CD8-positive, alpha-beta T cell (primary cell): ENCODE measurements at regions of chr5 and their contacts with region 1.

Region 1: GRCh38 chr5:131263648-131264450 is at the start of gene CDC42SE2:
- DNase-seq: peak; percentile 77 to 96 (median 86)
- ATAC-seq: peak; percentile 83
- H3K4me3 ChIP-seq: peak within 1 kb of the TSS; percentile 93 to 98
- H3K4me3 Mint-ChIP-seq: peak within 1 kb of the TSS; percentile 87
- H3K27ac ChIP-seq: peak within 1 kb of the TSS; percentile 90 to 93
- H3K27ac Mint-ChIP-seq: peak within 1 kb of the TSS; percentile 95
- H3K4me1 ChIP-seq: peaks cover 42% of the 10 kb centered on the region
- H3K4me1 Mint-ChIP-seq: peaks cover 56% of the 10 kb centered on the region
- H3K27me3 ChIP-seq: no peaks in the 10 kb centered on the region
- H3K27me3 Mint-ChIP-seq: no peaks in the 10 kb centered on the region
- CTCF ChIP-seq: no peak
- total RNA-seq, gene CDC42SE2: 340 to 348 TPM

Region 2: DNA sequence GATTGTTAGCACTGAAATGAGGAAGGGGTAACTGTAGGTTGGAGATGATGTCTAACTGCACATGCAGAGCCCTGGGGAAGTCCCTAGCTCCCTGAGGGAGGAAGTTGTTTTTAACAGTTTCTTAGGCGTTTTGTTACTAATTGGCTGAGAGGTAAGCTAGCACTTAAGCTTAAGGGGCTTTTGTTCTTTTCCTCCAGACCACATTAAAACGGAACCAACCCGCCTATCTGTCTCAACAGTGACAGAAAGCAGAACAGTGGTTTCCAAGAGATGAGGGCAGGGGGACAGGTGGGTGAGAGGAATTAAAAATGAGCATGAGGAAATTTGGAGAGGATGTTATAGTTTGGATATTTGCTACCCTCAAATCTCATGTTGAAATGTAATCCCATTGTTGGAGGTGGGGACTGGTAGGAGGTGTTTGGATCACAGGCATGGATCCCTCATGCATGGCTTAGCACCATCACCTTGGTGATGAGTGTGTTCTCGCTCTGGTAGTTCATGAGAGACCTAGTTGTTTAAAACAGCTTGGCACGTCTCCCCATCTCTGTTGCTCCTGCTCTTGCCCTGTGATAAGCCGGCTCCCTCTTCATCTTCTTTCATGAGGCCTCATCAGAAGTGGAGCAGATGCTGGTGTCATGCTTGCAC is 54.2 kb before region 1 on chr5:
- CTCF ChIA-PET with region 1: no interaction called
- POLR2A ChIA-PET with region 1: interaction called, 17 read pairs
- intact Hi-C with region 1: loop called in 1 of 2 experiments (anchors 2 kb)
- DNase-seq: peak; percentile 14 to 93 (median 55)
- ATAC-seq: peak; percentile 94
- H3K4me3 ChIP-seq: peak overlapping the region; percentile 2 to 13
- H3K4me3 Mint-ChIP-seq: peak overlapping the region; percentile 72
- H3K27ac ChIP-seq: peak overlapping the region; percentile 51 to 83
- H3K27ac Mint-ChIP-seq: peak overlapping the region; percentile 97
- H3K4me1 ChIP-seq: peaks cover 61% of the 10 kb centered on the region
- H3K4me1 Mint-ChIP-seq: peaks cover 60% of the 10 kb centered on the region
- H3K27me3 ChIP-seq: no peaks in the 10 kb centered on the region
- H3K27me3 Mint-ChIP-seq: no peaks in the 10 kb centered on the region
- CTCF ChIP-seq: no peak

Region 3: GRCh38 chr5:131281133-131281867 is 17.5 kb after region 1 on chr5:
- CTCF ChIA-PET with region 1: interaction called, 12 read pairs
- POLR2A ChIA-PET with region 1: interaction called, 239 read pairs
- intact Hi-C with region 1: loop called (anchors 1 to 2 kb)
- DNase-seq: peak in 2 of 9 experiments; percentile 83 to 91
- ATAC-seq: peak; percentile 81
- H3K4me3 ChIP-seq: peak overlapping the region; percentile 32 to 47
- H3K4me3 Mint-ChIP-seq: peak overlapping the region; percentile 81
- H3K27ac ChIP-seq: peak overlapping the region; percentile 75 to 86
- H3K27ac Mint-ChIP-seq: peak overlapping the region; percentile 94
- H3K4me1 ChIP-seq: peaks cover 87% of the 10 kb centered on the region
- H3K4me1 Mint-ChIP-seq: peaks cover 78% of the 10 kb centered on the region
- H3K27me3 ChIP-seq: no peaks in the 10 kb centered on the region
- H3K27me3 Mint-ChIP-seq: no peaks in the 10 kb centered on the region
- CTCF ChIP-seq: no peak

Region 4: DNA sequence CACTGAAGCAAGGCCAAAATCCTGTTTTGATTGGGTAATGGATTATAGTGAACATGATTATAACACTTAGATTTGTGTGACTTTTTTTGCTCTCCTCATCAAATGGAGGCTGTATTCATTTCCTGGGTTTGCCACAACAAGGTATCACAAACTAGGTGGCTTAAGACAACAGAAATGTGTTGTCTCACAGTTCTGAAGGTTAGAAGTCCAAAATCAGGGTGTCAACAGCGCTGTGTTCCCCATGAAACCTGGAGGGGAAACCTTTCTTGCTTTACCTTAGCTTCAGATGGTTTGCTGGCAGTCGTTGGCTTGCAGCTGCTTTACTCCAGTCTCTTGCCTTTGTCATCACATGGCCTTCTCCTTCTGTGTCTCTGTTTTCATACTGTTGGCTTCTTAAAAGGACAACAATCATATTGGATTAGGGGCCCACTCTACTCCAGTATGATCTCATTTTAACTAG is 32.4 kb after region 1 on chr5:
- CTCF ChIA-PET with region 1: interaction called, 4 read pairs
- POLR2A ChIA-PET with region 1: interaction called, 5 read pairs
- intact Hi-C with region 1: loop called in 1 of 2 experiments (anchors 5 kb)
- DNase-seq: peak in 4 of 9 experiments; percentile 29 to 74 (median 48)
- ATAC-seq: peak; percentile 60
- H3K4me3 ChIP-seq: no peak overlapping the region
- H3K4me3 Mint-ChIP-seq: peak overlapping the region; percentile 64
- H3K27ac ChIP-seq: peak overlapping the region in 1 of 2 experiments; percentile 55
- H3K27ac Mint-ChIP-seq: peak overlapping the region; percentile 84
- H3K4me1 ChIP-seq: peaks cover 81% of the 10 kb centered on the region
- H3K4me1 Mint-ChIP-seq: peaks cover 76% of the 10 kb centered on the region
- H3K27me3 ChIP-seq: no peaks in the 10 kb centered on the region
- H3K27me3 Mint-ChIP-seq: no peaks in the 10 kb centered on the region
- CTCF ChIP-seq: no peak

Region 5: GRCh38 chr5:131417240-131417869 is 153.5 kb after region 1 on chr5:
- CTCF ChIA-PET with region 1: interaction called, 17 read pairs
- POLR2A ChIA-PET with region 1: interaction called, 4 read pairs
- intact Hi-C with region 1: no loop called
- DNase-seq: peak; percentile 66 to 91 (median 85)
- ATAC-seq: peak; percentile 74
- H3K4me3 ChIP-seq: no peak overlapping the region
- H3K4me3 Mint-ChIP-seq: peak overlapping the region; percentile 64
- H3K27ac ChIP-seq: peak overlapping the region in 1 of 2 experiments; percentile 32
- H3K27ac Mint-ChIP-seq: peak overlapping the region; percentile 91
- H3K4me1 ChIP-seq: peaks cover 26% of the 10 kb centered on the region
- H3K4me1 Mint-ChIP-seq: peaks cover 45% of the 10 kb centered on the region
- H3K27me3 ChIP-seq: no peaks in the 10 kb centered on the region
- H3K27me3 Mint-ChIP-seq: no peaks in the 10 kb centered on the region
- CTCF ChIP-seq: peak; percentile 95